BJ (cell line): ENCODE measurements at regions of chr18 and their contacts with region 1.

Region 1: DNA sequence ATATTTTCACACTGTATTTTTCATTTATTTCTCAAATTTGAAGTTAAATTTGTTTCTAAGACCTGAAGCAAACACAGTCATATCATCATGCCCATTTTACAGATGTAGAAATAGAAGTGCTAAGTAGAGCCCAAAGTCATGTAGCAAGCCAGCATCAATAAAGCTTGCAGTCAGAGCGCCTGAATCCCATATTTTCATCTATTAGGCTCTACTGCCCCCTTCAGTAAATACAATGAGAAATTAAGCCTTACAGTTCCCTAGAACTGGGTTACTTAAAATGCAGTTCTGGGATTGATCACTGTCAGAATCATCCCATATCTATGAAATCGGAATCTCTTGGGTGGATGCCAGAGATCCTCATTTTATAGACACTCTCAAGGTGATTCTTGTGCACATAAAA is 419.9 kb downstream of the TGIF1 start:
- DNase-seq: peak; percentile 12
- H3K4me3 ChIP-seq: no peak overlapping the region
- H3K27me3 ChIP-seq: no peaks in the 10 kb centered on the region
- CTCF ChIP-seq: peak; percentile 47

Region 2: DNA sequence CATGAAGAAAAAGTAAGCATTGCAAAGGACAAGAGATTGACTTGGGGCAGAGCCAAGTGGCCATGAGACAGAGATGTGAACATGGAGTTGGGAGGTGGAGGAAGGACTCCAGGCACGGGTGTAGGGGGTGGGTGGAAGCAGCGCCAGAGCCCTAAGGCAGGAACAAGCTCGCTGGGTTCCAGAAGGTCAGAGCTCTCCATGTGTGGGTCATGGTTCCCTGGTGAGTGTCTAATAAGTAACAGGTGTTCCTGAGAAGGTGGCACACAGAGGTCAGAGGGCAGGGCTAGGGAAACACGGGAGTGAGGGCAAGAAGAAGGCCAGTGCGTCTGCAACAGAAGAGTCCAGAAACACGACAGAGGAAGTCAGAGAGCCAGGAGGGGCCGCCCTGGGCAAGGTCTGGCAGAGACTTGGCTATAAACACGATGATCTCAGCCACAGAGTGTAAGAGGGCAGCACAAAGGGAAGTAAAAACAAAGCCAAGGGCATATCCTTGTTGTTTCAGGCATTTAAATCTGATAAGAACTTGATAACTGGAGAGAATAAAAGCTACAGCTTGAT is 159.1 kb before region 1 on chr18:
- CTCF ChIA-PET with region 1: interaction called, 81 read pairs
- POLR2A ChIA-PET with region 1: no interaction called
- DNase-seq: no peak
- H3K4me3 ChIP-seq: no peak overlapping the region
- H3K27me3 ChIP-seq: peaks cover 3% of the 10 kb centered on the region
- CTCF ChIP-seq: no peak

Region 3: DNA sequence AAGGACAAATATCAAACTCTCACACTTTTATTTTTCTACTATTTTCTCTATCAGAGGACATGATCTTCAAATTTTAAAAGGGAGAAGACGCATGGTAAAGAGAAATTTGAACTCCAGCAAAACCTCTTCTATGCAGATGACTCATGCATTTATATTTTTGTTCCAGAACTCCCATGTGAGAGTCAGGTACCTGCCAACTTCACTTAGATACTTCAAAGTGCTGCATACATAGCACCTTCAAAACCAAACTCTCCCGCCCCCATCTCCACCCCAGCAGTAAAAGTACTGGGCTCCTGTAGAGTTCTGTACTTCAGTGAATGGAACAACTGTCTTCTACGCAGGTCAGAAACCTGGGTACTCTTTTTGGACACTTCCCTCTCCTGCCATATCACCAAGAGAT is 21.5 kb before region 1 on chr18:
- CTCF ChIA-PET with region 1: no interaction called
- POLR2A ChIA-PET with region 1: no interaction called
- DNase-seq: no peak
- H3K4me3 ChIP-seq: no peak overlapping the region
- H3K27me3 ChIP-seq: no peaks in the 10 kb centered on the region
- CTCF ChIP-seq: no peak